ENCODE measurements at regions of chr14 and their contacts with region 1.

Region 1: DNA sequence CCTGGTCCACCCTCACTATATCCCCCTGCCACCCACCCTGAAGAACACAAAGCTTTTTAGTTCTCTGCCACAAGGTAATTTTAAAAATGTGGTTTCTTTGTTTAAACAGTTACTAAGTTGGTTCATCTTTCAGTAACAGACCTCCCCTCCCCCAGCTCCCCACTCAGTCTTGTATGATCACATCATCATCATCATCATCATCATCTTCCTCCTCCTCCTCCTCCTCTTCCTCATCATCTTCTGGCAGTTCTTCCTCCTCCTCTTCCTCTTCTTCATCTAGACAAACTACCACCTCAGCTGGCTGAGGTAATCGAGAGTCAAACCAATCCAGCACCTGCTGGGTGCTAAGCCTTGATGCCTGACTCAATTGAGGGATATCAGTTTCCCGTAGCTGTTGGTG is 10.5 kb downstream of the HOMEZ start:
- DNase-seq: no peak
- ATAC-seq: no peak
- H3K4me3 ChIP-seq: no peak overlapping the region
- H3K27ac ChIP-seq: no peak overlapping the region
- H3K4me1 ChIP-seq: peaks cover 7% of the 10 kb centered on the region; the same call in 2 of the 3 replicates
- CTCF ChIP-seq: no peak
- EP300 ChIP-seq: no peak
- POLR2A ChIP-seq: no peak
- RAD21 ChIP-seq: no peak

Region 2: GRCh38 chr14:23286020-23286905 is 10.9 kb after region 1 on chr14 and contains the start of gene HOMEZ:
- CTCF ChIA-PET with region 1: interaction called, 254 read pairs
- POLR2A ChIA-PET with region 1: interaction called, 10 read pairs
- DNase-seq: peak; percentile 98
- ATAC-seq: peak; percentile 98 to 99
- H3K4me3 ChIP-seq: peak within 1 kb of the TSS; percentile 96
- H3K27ac ChIP-seq: peak within 1 kb of the TSS; percentile 95
- H3K4me1 ChIP-seq: peaks cover 18% of the 10 kb centered on the region
- CTCF ChIP-seq: no peak
- EP300 ChIP-seq: no peak
- POLR2A ChIP-seq: peak; percentile 61
- RAD21 ChIP-seq: no peak
- polyA plus RNA-seq, gene HOMEZ: 9.2 and 11.7 TPM in 2 replicates

Measured in A549 (cell line).